ENCODE measurements at regions of chr10 and their contacts with region 1.

Region 1: DNA sequence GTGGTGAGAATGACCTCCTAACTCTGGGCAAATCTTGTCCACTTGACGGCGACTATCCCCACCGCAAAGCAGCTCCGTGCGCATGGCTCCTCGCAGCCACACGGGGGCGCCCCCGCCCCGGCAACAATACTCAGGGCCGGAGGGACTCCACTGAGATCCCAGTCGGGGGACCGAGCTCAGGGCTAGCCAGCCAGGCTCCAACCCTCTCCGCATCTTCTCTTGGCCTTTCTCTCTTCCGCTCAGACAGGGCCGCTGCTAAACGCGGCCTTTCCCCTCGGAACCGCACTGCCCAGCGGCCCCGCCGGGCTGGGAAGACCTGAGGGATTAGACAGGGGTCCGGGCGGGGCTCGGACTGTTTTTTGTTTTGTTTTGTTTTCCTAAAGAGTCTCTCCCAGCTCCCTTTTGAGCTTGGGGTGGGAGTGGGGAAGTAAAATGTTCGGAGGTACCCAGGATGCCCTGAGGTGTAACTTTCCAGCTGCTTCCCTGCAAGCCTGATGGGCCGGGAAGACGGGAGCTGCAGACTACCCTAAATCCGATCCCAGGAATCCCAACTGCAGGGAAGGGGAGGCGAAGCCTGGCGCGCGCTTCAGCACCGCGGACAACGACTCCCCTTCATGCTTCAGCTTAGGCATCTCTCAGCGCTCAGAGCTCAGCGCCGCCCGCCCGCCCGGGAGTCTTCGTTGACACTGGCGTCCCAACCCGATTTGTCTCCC is 2.7 kb downstream of the KCNIP2 start:
- DNase-seq: peak; percentile 80
- H3K4me3 Mint-ChIP-seq: peak overlapping the region; percentile 78
- H3K27ac Mint-ChIP-seq: peak overlapping the region; percentile 38
- H3K4me1 Mint-ChIP-seq: peaks cover 42% of the 10 kb centered on the region
- H3K27me3 Mint-ChIP-seq: peaks cover 19% of the 10 kb centered on the region

Region 2: GRCh38 chr10:101782811-101783735 is 57.8 kb before region 1 on chr10 and contains the start of gene NPM3:
- CTCF ChIA-PET with region 1: interaction called, 12 read pairs
- POLR2A ChIA-PET with region 1: interaction called, 3 read pairs
- DNase-seq: peak; percentile 85
- H3K4me3 Mint-ChIP-seq: peak within 1 kb of the TSS; percentile 100
- H3K27ac Mint-ChIP-seq: peak within 1 kb of the TSS; percentile 80
- H3K4me1 Mint-ChIP-seq: peaks cover 66% of the 10 kb centered on the region
- H3K27me3 Mint-ChIP-seq: peaks cover 7% of the 10 kb centered on the region
- total RNA-seq, gene NPM3: 26.6 to 26.7 TPM

Region 3: GRCh38 chr10:101858723-101859500 is 18.0 kb after region 1 on chr10:
- CTCF ChIA-PET with region 1: interaction called, 60 read pairs
- POLR2A ChIA-PET with region 1: interaction called, 20 read pairs
- DNase-seq: no peak
- H3K4me3 Mint-ChIP-seq: no peak overlapping the region
- H3K27ac Mint-ChIP-seq: peak overlapping the region; percentile 48
- H3K4me1 Mint-ChIP-seq: peaks cover 26% of the 10 kb centered on the region
- H3K27me3 Mint-ChIP-seq: no peaks in the 10 kb centered on the region

Region 4: GRCh38 chr10:101956898-101957297 is 116.0 kb after region 1 on chr10:
- CTCF ChIA-PET with region 1: interaction called, 11 read pairs
- POLR2A ChIA-PET with region 1: no interaction called
- DNase-seq: no peak
- H3K4me3 Mint-ChIP-seq: no peak overlapping the region
- H3K27ac Mint-ChIP-seq: no peak overlapping the region
- H3K4me1 Mint-ChIP-seq: no peaks in the 10 kb centered on the region
- H3K27me3 Mint-ChIP-seq: no peaks in the 10 kb centered on the region

Region 5: DNA sequence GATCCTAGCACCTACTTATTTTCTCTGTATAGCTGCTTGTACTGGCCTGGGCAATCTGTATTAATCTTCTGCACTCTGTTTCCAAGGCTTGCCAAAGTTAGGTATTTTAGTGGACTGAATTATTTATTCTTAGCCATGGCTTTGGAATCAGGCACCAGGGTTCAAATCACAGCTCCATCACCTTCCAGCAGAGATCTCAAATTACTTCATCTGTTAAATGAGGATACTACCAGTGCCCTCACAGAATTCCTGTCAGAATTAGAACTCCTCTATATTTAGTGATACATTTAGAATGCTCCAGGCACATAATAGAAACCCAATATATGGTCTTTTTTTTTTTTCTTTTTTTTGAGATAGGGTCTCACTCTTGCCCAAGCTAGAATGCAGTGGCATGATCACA is 197.5 kb after region 1 on chr10:
- CTCF ChIA-PET with region 1: interaction called, 10 read pairs
- POLR2A ChIA-PET with region 1: interaction called, 4 read pairs
- DNase-seq: no peak
- H3K4me3 Mint-ChIP-seq: no peak overlapping the region
- H3K27ac Mint-ChIP-seq: no peak overlapping the region
- H3K4me1 Mint-ChIP-seq: peaks cover 1% of the 10 kb centered on the region
- H3K27me3 Mint-ChIP-seq: no peaks in the 10 kb centered on the region

Region 6: DNA sequence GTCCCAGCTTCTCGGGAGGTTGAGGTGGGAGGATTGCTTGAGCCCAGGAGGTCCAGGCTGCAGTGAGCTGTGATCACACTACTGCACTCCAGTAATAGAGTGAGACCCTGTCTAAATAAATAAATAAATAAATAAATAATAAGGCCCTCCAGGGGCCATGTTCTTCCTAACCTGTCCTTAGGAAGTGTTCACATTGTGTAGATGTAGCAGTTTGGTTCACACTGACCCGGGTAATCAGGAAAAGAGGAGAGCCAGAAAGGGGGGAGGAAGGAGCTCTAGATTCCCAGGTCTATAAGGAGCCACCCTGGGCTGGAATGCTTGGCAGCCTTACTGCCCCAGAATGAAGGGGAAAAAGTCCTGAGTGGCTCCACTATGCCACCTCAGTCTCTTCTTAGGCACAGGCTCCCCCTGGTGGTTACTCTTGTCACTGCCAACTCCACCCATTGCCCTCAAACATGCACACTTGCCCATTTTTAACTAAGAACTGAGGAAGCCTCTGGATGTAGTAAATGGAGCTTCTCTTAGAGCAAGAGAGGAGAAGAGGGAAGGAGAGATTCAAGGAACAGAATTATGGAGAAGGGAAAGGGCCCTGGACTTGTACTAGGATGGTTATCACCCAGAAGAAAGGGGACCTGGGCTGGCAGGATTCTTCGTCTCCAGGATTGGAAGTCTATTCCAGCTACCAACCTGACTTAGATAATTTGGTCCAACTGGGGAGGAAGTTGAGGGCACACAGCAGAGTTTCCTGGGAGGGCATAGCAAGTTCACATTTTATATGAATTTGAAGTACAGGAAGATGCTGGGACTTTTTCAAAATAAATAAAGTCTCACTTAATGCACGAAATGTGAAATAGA is 232.0 kb after region 1 on chr10:
- CTCF ChIA-PET with region 1: interaction called, 52 read pairs
- POLR2A ChIA-PET with region 1: interaction called, 4 read pairs
- DNase-seq: peak; percentile 83
- H3K4me3 Mint-ChIP-seq: no peak overlapping the region
- H3K27ac Mint-ChIP-seq: no peak overlapping the region
- H3K4me1 Mint-ChIP-seq: peaks cover 2% of the 10 kb centered on the region
- H3K27me3 Mint-ChIP-seq: peaks cover 2% of the 10 kb centered on the region

Measured in activated CD4-positive, alpha-beta memory T cell treated with anti-CD3 and anti-CD28 coated beads, Interleukin-2, amount 10 ng/mL, durations not matched to agents 7 days and 5 days (primary cell).